CD4-positive, alpha-beta memory T cell (primary cell): ENCODE measurements at regions of chr15 and their contacts with region 1.

Region 1: GRCh38 chr15:85618956-85619491 is 175.7 kb downstream of the KLHL25 start:
- DNase-seq: peak; percentile 45 to 76 (median 61)
- H3K4me3 ChIP-seq: peak overlapping the region; percentile 17 to 36
- H3K4me3 Mint-ChIP-seq: no peak overlapping the region
- H3K27ac ChIP-seq: peak overlapping the region; percentile 57
- H3K27ac Mint-ChIP-seq: no peak overlapping the region
- H3K4me1 ChIP-seq: peaks cover 68% of the 10 kb centered on the region
- H3K4me1 Mint-ChIP-seq: peaks cover 31 to 46% (median 36%) of the 10 kb centered on the region in 4 donors
- H3K27me3 ChIP-seq: no peaks in the 10 kb centered on the region
- H3K27me3 Mint-ChIP-seq: no peaks in the 10 kb centered on the region

Region 2: DNA sequence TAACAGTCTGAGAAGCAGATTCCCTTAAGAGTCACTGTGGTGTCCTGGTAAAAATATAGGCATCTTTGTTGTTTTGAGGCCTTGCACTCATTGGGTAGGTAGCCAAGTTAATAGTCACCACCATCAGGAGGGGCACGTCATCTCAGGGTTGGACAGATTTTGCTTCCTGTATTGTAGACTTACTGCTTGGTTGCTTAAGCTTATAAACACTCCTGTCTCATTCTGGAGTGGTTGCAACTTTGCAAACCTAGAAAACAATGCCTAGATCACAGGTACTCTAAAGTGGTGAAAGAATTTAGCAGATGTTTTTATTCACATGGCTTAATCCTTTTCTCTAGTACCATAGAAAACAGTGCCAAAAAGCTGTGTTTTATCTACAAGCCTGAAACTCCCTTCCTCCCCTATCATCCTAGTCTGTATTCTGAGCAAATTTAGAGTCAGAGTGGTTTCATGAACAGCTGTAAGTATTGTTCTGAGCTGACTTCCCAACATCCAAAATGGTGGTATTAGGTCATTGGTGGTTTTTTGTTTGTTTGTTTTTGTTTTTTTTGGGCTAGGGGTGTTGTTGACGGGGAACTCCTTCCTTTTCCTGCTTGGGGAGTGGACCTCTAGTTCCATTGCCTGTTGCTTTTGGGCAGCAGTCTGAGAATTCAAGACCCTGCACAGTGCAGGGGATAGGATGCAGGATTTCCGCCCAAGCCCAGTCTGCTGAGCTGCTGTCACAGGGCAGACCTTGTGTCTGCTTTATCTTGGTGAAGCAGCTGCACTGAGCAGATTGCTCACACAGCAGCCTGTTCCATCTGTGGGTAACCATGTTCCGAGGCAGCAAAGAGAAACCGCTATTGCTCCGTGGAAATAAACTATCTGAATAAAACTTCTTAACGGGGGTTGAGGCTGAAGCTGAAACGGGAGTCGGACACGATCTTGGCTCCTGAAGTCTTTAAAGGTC is 36.6 kb before region 1 on chr15:
- CTCF ChIA-PET with region 1: interaction called, 8 read pairs
- POLR2A ChIA-PET with region 1: interaction called, 45 read pairs
- intact Hi-C with region 1: loop called (anchors 2 kb)
- DNase-seq: peak; percentile 68 to 84 (median 76)
- H3K4me3 ChIP-seq: peak overlapping the region; percentile 74 to 92
- H3K4me3 Mint-ChIP-seq: peak overlapping the region; percentile 87 to 95 (median 89)
- H3K27ac ChIP-seq: peak overlapping the region; percentile 72
- H3K27ac Mint-ChIP-seq: peak overlapping the region; percentile 92 to 99 (median 98)
- H3K4me1 ChIP-seq: peaks cover 79% of the 10 kb centered on the region
- H3K4me1 Mint-ChIP-seq: peaks cover 63 to 82% (median 72%) of the 10 kb centered on the region in 4 donors
- H3K27me3 ChIP-seq: no peaks in the 10 kb centered on the region
- H3K27me3 Mint-ChIP-seq: no peaks in the 10 kb centered on the region

Region 3: GRCh38 chr15:85667491-85668424 is 48.7 kb after region 1 on chr15:
- CTCF ChIA-PET with region 1: interaction called, 6 read pairs
- POLR2A ChIA-PET with region 1: interaction called, 6 read pairs
- intact Hi-C with region 1: loop called (anchors 1 kb)
- DNase-seq: peak; percentile 79 to 91 (median 90)
- H3K4me3 ChIP-seq: no peak overlapping the region
- H3K4me3 Mint-ChIP-seq: peak overlapping the region; percentile 47 to 81 (median 60)
- H3K27ac ChIP-seq: peak overlapping the region; percentile 81
- H3K27ac Mint-ChIP-seq: peak overlapping the region; percentile 80 to 100 (median 97)
- H3K4me1 ChIP-seq: peaks cover 25% of the 10 kb centered on the region
- H3K4me1 Mint-ChIP-seq: peaks cover 18 to 28% (median 22%) of the 10 kb centered on the region in 4 donors
- H3K27me3 ChIP-seq: no peaks in the 10 kb centered on the region
- H3K27me3 Mint-ChIP-seq: no peaks in the 10 kb centered on the region

Region 4: GRCh38 chr15:85702321-85703101 is 83.5 kb after region 1 on chr15:
- CTCF ChIA-PET with region 1: interaction called, 9 read pairs
- POLR2A ChIA-PET with region 1: interaction called, 60 read pairs
- intact Hi-C with region 1: loop called (anchors 1 kb)
- DNase-seq: peak; percentile 39 to 76 (median 56)
- H3K4me3 ChIP-seq: peak overlapping the region; percentile 21 to 54
- H3K4me3 Mint-ChIP-seq: peak overlapping the region; percentile 68 to 86 (median 76)
- H3K27ac ChIP-seq: peak overlapping the region; percentile 82
- H3K27ac Mint-ChIP-seq: peak overlapping the region; percentile 94 to 98 (median 97)
- H3K4me1 ChIP-seq: peaks cover 87% of the 10 kb centered on the region
- H3K4me1 Mint-ChIP-seq: peaks cover 60 to 87% (median 71%) of the 10 kb centered on the region in 4 donors
- H3K27me3 ChIP-seq: no peaks in the 10 kb centered on the region
- H3K27me3 Mint-ChIP-seq: no peaks in the 10 kb centered on the region

Region 5: DNA sequence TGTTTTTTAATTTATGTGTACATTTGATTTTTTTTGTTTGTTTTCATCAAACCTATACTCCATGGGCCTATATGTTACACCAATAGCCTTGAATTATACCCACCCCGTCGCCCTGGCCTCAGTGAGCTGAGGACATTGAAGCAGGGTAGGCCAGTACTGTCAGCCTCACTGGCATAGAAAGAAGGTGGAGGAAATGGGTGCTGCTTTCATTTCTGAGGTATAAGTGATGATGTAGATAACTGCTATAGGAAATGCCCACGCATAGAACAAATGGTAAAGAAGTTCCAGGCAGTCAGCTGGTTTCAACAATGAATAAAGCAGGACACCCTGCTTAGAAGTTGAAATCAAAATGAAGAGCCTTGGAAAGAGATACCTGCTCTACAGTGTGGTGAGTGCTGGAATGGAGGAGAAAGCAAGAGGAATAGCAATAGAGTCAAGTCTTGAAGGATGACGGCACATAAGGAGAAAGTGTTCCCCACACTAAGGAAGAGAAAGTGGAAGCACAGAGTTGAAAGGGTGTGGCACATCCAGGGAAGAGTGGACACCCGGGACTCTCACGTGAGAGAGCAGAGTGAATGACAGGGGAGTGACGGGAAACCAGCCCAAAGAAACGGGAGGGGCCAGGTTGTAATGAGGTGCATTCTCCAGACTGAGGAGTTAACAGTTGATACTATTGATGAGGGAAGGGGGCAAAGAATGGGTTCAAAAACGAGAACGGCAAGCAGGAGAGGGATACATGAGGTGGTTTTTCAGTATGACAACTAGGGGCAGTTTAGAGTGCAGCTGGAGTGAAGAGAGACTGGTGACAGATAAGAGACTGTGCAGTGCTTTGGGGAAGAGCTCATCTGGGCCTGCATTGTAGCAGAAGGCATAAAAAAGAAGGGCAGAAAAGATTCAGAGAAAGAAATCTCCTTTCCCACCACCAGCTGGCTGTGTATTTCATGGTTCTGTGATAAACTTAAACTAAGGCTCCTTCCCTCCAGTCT is 105.2 kb after region 1 on chr15:
- CTCF ChIA-PET with region 1: interaction called, 21 read pairs
- POLR2A ChIA-PET with region 1: interaction called, 5 read pairs
- intact Hi-C with region 1: loop called (anchors 5 kb)
- DNase-seq: peak; percentile 31 to 55 (median 53)
- H3K4me3 ChIP-seq: no peak overlapping the region
- H3K4me3 Mint-ChIP-seq: peak overlapping the region; percentile 59 to 82 (median 70)
- H3K27ac ChIP-seq: peak overlapping the region; percentile 64
- H3K27ac Mint-ChIP-seq: peak overlapping the region; percentile 85 to 99 (median 97)
- H3K4me1 ChIP-seq: peaks cover 49% of the 10 kb centered on the region
- H3K4me1 Mint-ChIP-seq: peaks cover 36 to 46% (median 41%) of the 10 kb centered on the region in 4 donors
- H3K27me3 ChIP-seq: no peaks in the 10 kb centered on the region
- H3K27me3 Mint-ChIP-seq: no peaks in the 10 kb centered on the region

Region 6: DNA sequence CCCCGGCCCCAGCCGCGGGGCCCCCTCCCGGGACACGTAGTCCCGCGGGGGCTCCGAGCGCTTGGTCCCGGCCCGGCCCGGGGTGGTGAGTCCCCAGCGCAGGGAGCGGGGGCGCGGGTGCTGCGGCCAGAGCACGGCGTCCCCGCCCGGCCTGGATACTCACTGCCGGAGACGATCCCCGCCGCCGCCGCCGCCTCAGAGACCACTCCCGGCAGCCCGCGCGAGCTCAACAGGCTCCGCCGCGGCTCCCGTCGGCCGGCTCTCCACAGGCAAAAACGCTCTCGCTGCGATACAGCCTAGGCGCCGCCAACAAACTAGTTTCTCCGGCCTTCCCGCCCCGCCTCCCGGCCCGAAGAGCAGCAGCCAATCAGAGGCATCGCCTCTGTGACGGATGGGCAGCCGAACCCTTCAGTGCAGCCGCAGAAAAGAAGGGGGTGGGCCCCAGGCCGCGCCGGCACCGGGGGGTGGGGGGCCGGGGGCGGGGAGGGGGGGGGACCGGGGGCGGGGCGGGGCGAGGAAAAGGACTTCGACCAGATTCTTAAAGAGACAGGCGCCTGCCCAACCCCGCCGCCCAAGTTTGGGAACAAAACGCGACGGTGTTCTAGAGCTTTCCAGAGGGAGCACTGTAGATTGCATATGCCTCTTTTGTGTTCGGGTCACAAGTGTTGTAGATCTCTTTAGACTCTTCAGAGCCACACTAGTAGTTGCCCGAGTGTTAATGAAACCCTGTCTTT is 175.7 kb after region 1 on chr15 and contains the start of gene KLHL25:
- CTCF ChIA-PET with region 1: interaction called, 3 read pairs
- POLR2A ChIA-PET with region 1: no interaction called
- intact Hi-C with region 1: loop called (anchors 5 kb)
- DNase-seq: peak; percentile 91 to 95 (median 92)
- H3K4me3 ChIP-seq: peak within 1 kb of the TSS; percentile 70 to 80
- H3K4me3 Mint-ChIP-seq: peak within 1 kb of the TSS; percentile 87 to 97 (median 93)
- H3K27ac ChIP-seq: peak within 1 kb of the TSS; percentile 65
- H3K27ac Mint-ChIP-seq: peak within 1 kb of the TSS; percentile 71 to 96 (median 91)
- H3K4me1 ChIP-seq: peaks cover 30% of the 10 kb centered on the region
- H3K4me1 Mint-ChIP-seq: peaks cover 25 to 51% (median 37%) of the 10 kb centered on the region in 4 donors
- H3K27me3 ChIP-seq: no peaks in the 10 kb centered on the region
- H3K27me3 Mint-ChIP-seq: no peaks in the 10 kb centered on the region
- total RNA-seq, gene KLHL25: 10.3 to 11.4 TPM